HepG2 (cell line): ENCODE measurements at regions of chr10 and their contacts with region 1.

Region 1: DNA sequence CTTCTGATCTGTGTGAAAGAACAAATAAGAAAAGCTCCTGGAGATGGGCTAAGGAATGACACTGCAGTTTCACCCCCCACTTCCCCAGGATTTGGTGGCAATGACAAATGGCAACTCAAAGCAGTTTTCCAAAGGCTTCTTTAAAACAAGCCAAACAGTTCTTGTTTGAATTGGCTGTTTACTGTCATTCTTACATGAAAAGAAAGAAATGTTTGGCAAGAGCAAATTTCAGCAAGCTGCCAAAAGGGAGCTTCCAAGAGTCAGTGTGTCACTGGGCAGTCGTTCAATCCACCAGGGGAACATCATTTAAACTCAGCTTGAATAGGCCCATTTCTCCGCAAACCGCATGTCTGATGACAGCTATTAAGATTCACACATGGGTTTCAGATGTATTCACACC is 119.0 kb upstream of the RHOBTB1 start:
- DNase-seq: peak; percentile 95
- ATAC-seq: peak; percentile 84
- H3K4me3 ChIP-seq: no peak overlapping the region
- H3K27ac ChIP-seq: peak overlapping the region; percentile 87
- H3K4me1 ChIP-seq: peaks cover 63% of the 10 kb centered on the region
- H3K27me3 ChIP-seq: no peaks in the 10 kb centered on the region
- CTCF ChIP-seq: no peak
- EP300 ChIP-seq: peak in 1 of 2 experiments; percentile 99; a peak in 2 of 4 replicates
- POLR2A ChIP-seq: no peak
- RAD21 ChIP-seq: no peak; the same call in 1 of the 2 replicates

Region 2: GRCh38 chr10:60853107-60853506 is 209.9 kb before region 1 on chr10:
- CTCF ChIA-PET with region 1: no interaction called
- POLR2A ChIA-PET with region 1: no interaction called
- in situ Hi-C with region 1: no loop called
- intact Hi-C with region 1: no loop called
- DNase-seq: no peak
- ATAC-seq: no peak
- H3K4me3 ChIP-seq: no peak overlapping the region
- H3K27ac ChIP-seq: no peak overlapping the region
- H3K4me1 ChIP-seq: peaks cover 9% of the 10 kb centered on the region; the same call in 1 of the 2 replicates
- H3K27me3 ChIP-seq: peaks cover 0 to 4% of the 10 kb centered on the region in 2 experiments; a peak in 1 of 5 replicates
- CTCF ChIP-seq: no peak
- EP300 ChIP-seq: no peak
- POLR2A ChIP-seq: no peak
- RAD21 ChIP-seq: no peak

Region 3: GRCh38 chr10:60944159-60944909 is 118.7 kb before region 1 on chr10 and contains the start of gene RHOBTB1:
- CTCF ChIA-PET with region 1: no interaction called
- POLR2A ChIA-PET with region 1: interaction called, 11 read pairs
- in situ Hi-C with region 1: no loop called
- intact Hi-C with region 1: no loop called
- DNase-seq: peak; percentile 34
- ATAC-seq: peak; percentile 84
- H3K4me3 ChIP-seq: peak within 1 kb of the TSS; percentile 59 to 71 (median 69); a peak in 5 of 6 replicates
- H3K27ac ChIP-seq: peak within 1 kb of the TSS; percentile 78
- H3K4me1 ChIP-seq: peaks cover 26% of the 10 kb centered on the region
- H3K27me3 ChIP-seq: no peaks in the 10 kb centered on the region; a peak in 1 of 5 replicates
- CTCF ChIP-seq: no peak
- EP300 ChIP-seq: no peak
- POLR2A ChIP-seq: peak; percentile 34; a peak in 1 of 4 replicates
- RAD21 ChIP-seq: no peak
- total RNA-seq, gene RHOBTB1: 59.5 and 80.6 TPM in 2 replicates

Region 4: GRCh38 chr10:60978287-60979115 is 84.5 kb before region 1 on chr10:
- CTCF ChIA-PET with region 1: no interaction called
- POLR2A ChIA-PET with region 1: interaction called, 3 read pairs
- in situ Hi-C with region 1: no loop called
- intact Hi-C with region 1: loop called (anchors 1 kb)
- DNase-seq: peak; percentile 89
- ATAC-seq: peak; percentile 96
- H3K4me3 ChIP-seq: peak overlapping the region in 2 of 3 experiments; percentile 31 to 39; a peak in 2 of 6 replicates
- H3K27ac ChIP-seq: peak overlapping the region; percentile 87
- H3K4me1 ChIP-seq: peaks cover 67% of the 10 kb centered on the region
- H3K27me3 ChIP-seq: no peaks in the 10 kb centered on the region
- CTCF ChIP-seq: no peak
- EP300 ChIP-seq: 0 out of 4 replicates have a peak, but pooled peaks of 1 of the 2 experiments have one; percentile 25
- POLR2A ChIP-seq: no peak
- RAD21 ChIP-seq: no peak

Region 5: DNA sequence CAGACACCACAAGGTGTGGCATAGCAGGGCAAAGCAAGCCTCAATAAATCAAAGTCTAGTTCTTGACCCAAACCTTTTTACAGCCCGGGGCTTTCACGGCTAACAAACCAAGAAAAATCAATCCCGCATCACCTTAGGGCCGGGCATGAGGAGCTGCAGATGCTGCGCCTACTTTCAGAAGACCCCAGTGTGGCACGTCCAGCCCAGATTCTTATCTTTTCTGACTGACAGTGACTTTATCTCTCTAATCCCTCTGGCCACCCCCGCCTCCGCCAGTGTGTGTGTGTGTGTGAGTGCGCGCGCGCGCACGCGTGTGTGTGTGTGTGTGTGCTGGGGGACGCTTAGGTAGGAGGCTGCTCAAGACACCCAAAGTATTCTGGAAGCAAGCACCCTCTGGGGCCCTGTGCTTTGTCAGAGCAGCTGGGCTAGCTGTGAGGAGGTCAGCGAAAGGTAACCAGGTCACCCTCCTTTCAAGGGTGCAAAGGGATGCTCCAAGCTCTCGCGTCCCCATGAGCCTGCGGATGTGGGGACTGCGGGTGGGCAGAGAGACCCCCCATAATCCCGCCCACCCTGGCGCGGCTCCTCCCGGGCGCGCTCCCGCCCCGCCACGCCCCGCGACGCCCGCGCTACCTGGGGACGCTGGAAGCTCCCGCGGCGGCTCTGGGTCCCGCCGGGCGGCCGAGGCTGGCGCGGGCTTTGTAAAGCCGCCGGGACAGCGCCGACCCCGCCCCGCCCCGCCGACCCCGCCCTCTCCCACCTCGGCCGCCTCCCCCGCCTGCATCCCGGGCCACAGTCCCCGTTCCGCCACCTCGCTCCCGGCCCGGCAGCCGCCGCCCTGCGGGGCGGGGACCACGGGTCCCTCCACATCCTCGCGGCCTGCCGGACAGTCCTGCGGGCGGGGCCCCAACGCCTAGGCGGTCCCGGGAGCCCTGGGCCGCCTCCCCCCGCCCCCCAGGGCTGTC is 62.0 kb before region 1 on chr10:
- CTCF ChIA-PET with region 1: no interaction called
- POLR2A ChIA-PET with region 1: interaction called, 4 read pairs
- in situ Hi-C with region 1: no loop called
- intact Hi-C with region 1: loop called (anchors 1 kb)
- DNase-seq: peak; percentile 71
- ATAC-seq: peak; percentile 95
- H3K4me3 ChIP-seq: peak overlapping the region; percentile 79 to 98 (median 92)
- H3K27ac ChIP-seq: peak overlapping the region; percentile 59
- H3K4me1 ChIP-seq: peaks cover 48% of the 10 kb centered on the region
- H3K27me3 ChIP-seq: no peaks in the 10 kb centered on the region
- CTCF ChIP-seq: no peak
- EP300 ChIP-seq: no peak
- POLR2A ChIP-seq: peak; percentile 22 to 49; a peak in 1 of 4 replicates
- RAD21 ChIP-seq: 0 out of 2 replicates have a peak, but pooled peaks have one; percentile 10

Region 6: DNA sequence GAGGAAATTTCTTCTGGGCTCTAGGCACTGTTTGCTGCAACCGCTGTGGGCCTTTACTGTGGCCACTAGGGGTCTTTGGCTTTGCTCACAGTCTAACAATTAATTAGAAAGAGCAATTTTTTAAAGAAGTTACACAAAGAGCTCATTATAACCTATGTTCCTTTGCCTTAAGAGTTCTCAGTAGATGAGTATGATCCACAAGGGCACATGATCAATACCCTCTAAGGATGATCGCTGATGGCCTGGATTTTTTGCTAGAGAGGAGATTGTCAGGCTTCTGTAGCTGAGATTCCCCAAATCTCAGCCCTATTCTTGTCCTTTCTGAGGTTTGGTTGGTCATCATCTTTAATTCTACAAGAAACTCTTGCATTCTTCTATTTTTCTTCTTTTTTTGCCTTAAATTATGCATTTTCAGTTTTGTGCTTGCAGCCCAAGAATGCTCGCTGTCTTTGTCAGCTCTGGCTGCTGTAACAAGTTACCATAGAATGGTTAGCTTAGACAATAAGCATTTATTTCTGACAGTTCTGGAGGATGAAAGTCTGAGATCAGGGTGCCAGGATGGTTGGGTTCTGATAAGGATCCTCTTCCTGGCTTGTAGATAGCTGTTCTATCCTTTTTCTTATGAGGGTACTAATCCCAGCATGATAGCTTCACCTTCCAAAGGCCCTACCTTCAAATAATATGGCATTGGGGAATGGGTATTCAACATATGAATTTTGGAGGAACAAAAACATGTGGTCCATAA is 38.0 kb before region 1 on chr10:
- CTCF ChIA-PET with region 1: no interaction called
- POLR2A ChIA-PET with region 1: interaction called, 3 read pairs
- in situ Hi-C with region 1: no loop called
- intact Hi-C with region 1: loop called (anchors 5 kb)
- DNase-seq: peak; percentile 31
- ATAC-seq: peak; percentile 92
- H3K4me3 ChIP-seq: no peak overlapping the region
- H3K27ac ChIP-seq: no peak overlapping the region
- H3K4me1 ChIP-seq: no peaks in the 10 kb centered on the region
- H3K27me3 ChIP-seq: no peaks in the 10 kb centered on the region
- CTCF ChIP-seq: peak; percentile 55
- EP300 ChIP-seq: no peak
- POLR2A ChIP-seq: no peak
- RAD21 ChIP-seq: peak; percentile 36; the same call in 1 of the 2 replicates

Region 7: GRCh38 chr10:61078542-61079275 is 15.7 kb after region 1 on chr10:
- CTCF ChIA-PET with region 1: no interaction called
- POLR2A ChIA-PET with region 1: interaction called, 37 read pairs
- in situ Hi-C with region 1: no loop called
- intact Hi-C with region 1: loop called (anchors 1 kb)
- DNase-seq: no peak
- ATAC-seq: no peak
- H3K4me3 ChIP-seq: no peak overlapping the region
- H3K27ac ChIP-seq: no peak overlapping the region
- H3K4me1 ChIP-seq: peaks cover 38% of the 10 kb centered on the region
- H3K27me3 ChIP-seq: no peaks in the 10 kb centered on the region
- CTCF ChIP-seq: no peak
- EP300 ChIP-seq: no peak
- POLR2A ChIP-seq: no peak
- RAD21 ChIP-seq: no peak